Dorsolateral prefrontal cortex (tissue), 120 donors: ENCODE measurements at regions of chr19 and their contacts with region 1.

Region 1: GRCh38 chr19:1249298-1249989 is 1.1 kb downstream of the MIDN start:
- DNase-seq: peak; percentile 84 to 95 (median 90)
- H3K4me3 ChIP-seq: peak overlapping the region; percentile 59 to 91 (median 79)
- H3K27ac ChIP-seq: peak overlapping the region; percentile 61 to 100 (median 99)
- H3K27me3 ChIP-seq: no peaks in the 10 kb centered on the region
- CTCF ChIP-seq: no peak

Region 2: GRCh38 chr19:1266916-1267476 is 17.6 kb after region 1 on chr19:
- intact Hi-C with region 1: loop called (anchors 1 kb)
- DNase-seq: peak in 6 of 10 donors; percentile 65 to 89 (median 76)
- H3K4me3 ChIP-seq: peak overlapping the region; percentile 39 to 70 (median 58)
- H3K27ac ChIP-seq: peak overlapping the region; percentile 20 to 100 (median 96)
- H3K27me3 ChIP-seq: no peaks in the 10 kb centered on the region
- CTCF ChIP-seq: peak in 55 of 56 donors; percentile 78 to 100 (median 98)

Region 3: DNA sequence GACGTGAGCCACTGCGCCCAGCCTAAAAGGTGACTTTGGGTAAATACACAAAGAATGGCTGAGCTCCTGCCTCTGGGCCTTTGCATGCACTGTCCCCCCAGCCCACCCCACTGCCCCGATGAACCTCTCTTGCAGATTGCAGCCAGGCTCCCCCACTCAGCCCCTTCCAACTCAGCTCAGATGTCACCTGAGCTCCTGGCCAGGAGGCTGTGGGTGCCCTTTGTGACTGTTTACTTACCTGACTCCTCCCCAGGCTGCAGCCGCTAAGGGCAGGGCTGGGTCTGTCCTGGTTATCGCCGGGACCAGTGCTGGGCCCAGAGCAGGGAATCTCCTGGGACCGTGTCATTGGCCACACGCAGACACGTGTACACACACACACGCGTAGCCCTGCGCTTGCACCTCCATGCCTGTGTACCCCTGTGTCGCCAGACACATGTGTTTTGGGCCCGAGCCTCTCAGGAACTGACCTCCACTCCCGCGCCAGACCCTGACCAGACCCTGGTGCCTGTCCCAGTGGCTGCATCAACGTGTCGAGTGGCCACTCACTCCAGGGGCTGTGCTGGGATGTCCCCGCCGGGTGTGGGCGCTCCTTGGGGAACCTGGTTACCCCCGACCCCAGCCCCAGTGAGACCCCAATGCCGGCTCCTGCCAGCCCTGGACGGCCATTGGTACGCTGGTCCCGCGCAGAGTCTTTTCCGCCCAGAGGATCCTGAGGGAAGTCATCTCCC is 54.9 kb after region 1 on chr19:
- intact Hi-C with region 1: no loop called
- DNase-seq: no peak
- H3K4me3 ChIP-seq: no peak overlapping the region
- H3K27ac ChIP-seq: peak overlapping the region in 8 of 59 donors; percentile 80 to 96 (median 94)
- H3K27me3 ChIP-seq: no peaks in the 10 kb centered on the region
- CTCF ChIP-seq: no peak